ENCODE measurements at regions of chr10 and their contacts with region 1.

Region 1: DNA sequence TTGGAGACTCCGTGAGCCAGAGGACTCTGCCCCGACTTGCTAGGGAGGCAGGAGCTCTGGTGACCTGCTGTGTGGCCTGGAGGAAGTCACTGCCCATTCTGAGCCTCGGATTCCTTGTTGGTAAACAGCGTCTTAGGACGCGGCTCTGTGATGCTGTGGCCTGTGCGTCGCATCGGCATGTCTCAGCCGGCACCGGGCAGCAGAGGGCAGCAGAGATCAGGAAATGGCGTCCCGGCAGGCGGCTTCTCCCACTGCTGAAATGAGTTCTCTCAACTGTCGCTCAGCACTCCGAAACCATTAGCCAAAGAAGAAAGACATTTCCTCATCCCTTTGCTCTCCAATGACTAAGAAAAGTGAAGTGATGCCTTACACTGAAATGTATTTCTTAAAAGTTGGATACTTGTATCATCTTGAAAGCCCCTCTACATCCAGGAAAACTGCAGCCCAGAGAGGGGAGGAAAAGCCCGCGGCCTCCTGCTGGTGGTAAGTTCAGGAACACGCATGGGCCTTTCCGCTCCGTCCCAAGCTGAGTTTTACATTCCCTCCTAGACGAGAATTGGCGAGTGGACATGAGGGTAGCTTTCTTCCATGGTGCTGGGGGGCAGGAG is 91.7 kb downstream of the WDR11 start:
- DNase-seq: peak; percentile 72 to 91 (median 86)
- H3K4me3 ChIP-seq: peak overlapping the region in 25 of 59 donors; percentile 5 to 41 (median 24)
- H3K27ac ChIP-seq: peak overlapping the region in 53 of 59 donors; percentile 4 to 99 (median 77)
- H3K27me3 ChIP-seq: no peaks in the 10 kb centered on the region
- CTCF ChIP-seq: peak; percentile 49 to 99 (median 94)

Region 2: DNA sequence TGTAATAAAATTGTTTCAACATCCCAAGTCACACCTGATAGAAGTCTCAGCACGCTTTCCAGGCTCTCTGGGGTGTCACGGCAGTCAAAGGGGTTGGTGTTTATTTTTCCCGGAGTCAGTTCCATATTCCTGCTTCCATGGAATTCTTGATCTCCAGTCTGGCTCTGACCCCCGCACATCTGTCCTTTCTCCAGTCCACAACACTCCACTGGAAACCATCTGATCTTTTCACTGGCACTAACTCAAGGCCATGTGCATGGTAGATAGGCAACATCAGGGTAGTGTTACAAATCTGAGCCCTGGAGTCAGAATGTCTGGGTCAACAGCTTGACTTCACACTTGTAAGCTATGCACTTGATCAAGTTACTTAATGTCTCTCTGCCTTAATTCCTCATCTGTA is 84.5 kb after region 1 on chr10:
- intact Hi-C with region 1: no loop called
- DNase-seq: no peak
- H3K4me3 ChIP-seq: no peak overlapping the region
- H3K27ac ChIP-seq: no peak overlapping the region
- H3K27me3 ChIP-seq: no peaks in the 10 kb centered on the region
- CTCF ChIP-seq: no peak

Region 3: DNA sequence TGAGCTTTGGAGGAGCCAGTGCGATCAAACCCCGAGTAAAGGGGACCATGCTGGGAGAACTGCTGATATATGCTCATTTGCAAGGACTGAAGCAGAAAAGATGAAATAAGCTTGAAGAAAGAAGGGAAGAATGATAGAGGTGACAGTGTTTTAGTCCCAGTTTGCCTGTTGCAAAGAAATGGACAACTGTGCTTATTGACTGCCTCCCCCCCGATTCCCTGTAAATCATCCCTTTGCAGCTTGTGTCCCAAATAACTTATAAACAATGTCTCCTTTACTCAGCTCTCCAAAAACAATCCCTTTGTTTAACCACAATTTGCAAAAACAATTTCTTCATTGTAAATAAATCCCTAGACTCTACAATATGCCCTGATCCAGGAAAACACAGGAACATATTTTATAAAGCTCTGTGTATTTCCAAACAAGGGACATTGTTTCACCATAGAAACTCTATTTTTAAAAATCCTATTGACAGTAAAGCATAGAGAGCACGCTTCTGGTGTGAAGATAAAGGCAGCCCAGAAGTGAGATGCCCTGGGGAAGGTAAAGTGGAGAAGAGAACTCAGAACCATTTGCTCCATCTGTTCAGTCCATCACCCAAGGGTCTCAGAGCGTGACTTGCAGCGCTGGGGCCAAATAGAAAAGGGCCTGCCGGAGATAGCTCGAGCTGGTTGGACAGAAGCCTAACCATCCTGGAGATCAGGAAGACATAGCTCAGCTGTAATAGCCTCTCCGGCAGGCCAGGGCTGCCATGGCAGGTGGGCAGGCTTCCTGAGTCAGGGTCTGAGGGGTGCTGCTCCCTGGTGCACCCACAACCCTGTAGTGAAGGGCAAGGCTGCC is 188.7 kb after region 1 on chr10:
- intact Hi-C with region 1: loop called in 1 of 2 experiments (anchors 2 kb)
- DNase-seq: peak in 2 of 10 donors; percentile 44 to 50
- H3K4me3 ChIP-seq: peak overlapping the region in 3 of 59 donors; percentile 2 to 17 (median 14)
- H3K27ac ChIP-seq: peak overlapping the region; percentile 42 to 99 (median 95)
- H3K27me3 ChIP-seq: no peaks in the 10 kb centered on the region
- CTCF ChIP-seq: peak in 2 of 56 donors; percentile 4 to 6

Region 4: GRCh38 chr10:121216721-121217181 is 273.8 kb after region 1 on chr10:
- intact Hi-C with region 1: loop called in 1 of 2 experiments (anchors 10 kb)
- DNase-seq: peak; percentile 5 to 87 (median 76)
- H3K4me3 ChIP-seq: peak overlapping the region in 2 of 59 donors; percentile 8 to 19
- H3K27ac ChIP-seq: peak overlapping the region; percentile 59 to 97 (median 91)
- H3K27me3 ChIP-seq: peaks cover 0 to 6% (median 0%) of the 10 kb centered on the region in 45 donors
- CTCF ChIP-seq: peak in 10 of 56 donors; percentile 5 to 42 (median 26)

Region 5: GRCh38 chr10:121332829-121333633 is 390.1 kb after region 1 on chr10:
- intact Hi-C with region 1: loop called in 1 of 2 experiments (anchors 10 kb)
- DNase-seq: peak in 1 of 10 donors; percentile 14
- H3K4me3 ChIP-seq: no peak overlapping the region
- H3K27ac ChIP-seq: peak overlapping the region in 30 of 59 donors; percentile 1 to 87 (median 54)
- H3K27me3 ChIP-seq: peaks cover 0 to 3% (median 0%) of the 10 kb centered on the region in 45 donors
- CTCF ChIP-seq: no peak

Region 6: DNA sequence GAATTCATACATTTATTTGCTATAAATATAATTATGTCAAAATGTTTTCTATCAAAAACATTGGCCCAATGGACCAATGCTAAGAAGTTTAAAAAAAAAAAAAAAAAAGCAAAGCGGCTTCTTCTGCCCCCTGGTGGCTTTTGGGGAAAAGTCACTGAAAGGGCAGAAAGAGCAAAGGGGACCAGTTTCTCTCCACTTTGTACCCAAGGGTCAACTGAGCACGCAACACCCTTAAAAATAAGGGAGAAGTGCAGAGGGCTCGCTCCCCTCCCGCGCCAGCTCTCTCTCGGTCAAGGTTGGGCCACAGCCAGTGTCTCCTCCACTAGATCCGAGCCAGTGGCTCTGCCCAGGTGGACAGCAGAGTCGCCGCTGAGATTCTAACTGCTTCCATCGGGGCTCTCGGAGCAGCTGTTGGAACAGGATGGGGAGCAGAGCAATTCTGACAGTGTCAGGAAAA is 791.7 kb after region 1 on chr10:
- intact Hi-C with region 1: loop called (anchors 2 kb)
- DNase-seq: peak in 2 of 10 donors; percentile 7 to 56
- H3K4me3 ChIP-seq: peak overlapping the region in 52 of 59 donors; percentile 8 to 61 (median 42)
- H3K27ac ChIP-seq: peak overlapping the region in 8 of 59 donors; percentile 5 to 60 (median 16)
- H3K27me3 ChIP-seq: no peaks in the 10 kb centered on the region
- CTCF ChIP-seq: peak; percentile 62 to 89 (median 83)

Region 7: DNA sequence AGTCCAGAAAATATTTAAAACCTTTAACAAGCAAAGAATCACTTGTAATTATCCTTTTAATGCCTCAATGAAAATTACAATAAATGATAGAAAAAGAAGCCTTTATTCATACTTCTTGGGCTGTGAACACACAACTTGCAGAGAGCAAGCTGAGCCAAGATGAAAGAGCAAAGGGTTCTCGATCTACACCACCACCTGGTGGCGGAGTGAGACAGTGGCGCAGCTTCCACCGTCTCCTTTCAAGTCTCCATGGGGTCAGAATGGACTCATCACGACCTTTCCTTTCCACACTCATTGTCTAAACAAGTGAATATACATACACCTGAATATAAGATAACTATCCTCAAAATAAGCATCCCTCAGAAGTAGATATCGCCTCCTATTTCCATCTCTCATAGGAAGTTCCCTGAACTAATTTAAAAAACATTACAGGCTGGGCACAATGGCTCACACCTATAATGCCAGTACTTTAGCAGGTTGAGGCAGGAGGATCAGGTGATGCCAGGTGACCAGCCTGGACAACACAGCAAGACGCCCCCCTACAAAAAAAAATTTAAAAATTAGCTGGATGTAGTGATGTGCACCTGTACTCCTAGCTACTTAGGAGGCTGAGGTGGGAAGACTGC is 944.2 kb after region 1 on chr10:
- intact Hi-C with region 1: loop called (anchors 1 to 5 kb)
- DNase-seq: peak; percentile 10 to 79 (median 68)
- H3K4me3 ChIP-seq: no peak overlapping the region
- H3K27ac ChIP-seq: peak overlapping the region in 6 of 59 donors; percentile 4 to 25 (median 17)
- H3K27me3 ChIP-seq: no peaks in the 10 kb centered on the region
- CTCF ChIP-seq: peak; percentile 61 to 93 (median 85)

Region 8: DNA sequence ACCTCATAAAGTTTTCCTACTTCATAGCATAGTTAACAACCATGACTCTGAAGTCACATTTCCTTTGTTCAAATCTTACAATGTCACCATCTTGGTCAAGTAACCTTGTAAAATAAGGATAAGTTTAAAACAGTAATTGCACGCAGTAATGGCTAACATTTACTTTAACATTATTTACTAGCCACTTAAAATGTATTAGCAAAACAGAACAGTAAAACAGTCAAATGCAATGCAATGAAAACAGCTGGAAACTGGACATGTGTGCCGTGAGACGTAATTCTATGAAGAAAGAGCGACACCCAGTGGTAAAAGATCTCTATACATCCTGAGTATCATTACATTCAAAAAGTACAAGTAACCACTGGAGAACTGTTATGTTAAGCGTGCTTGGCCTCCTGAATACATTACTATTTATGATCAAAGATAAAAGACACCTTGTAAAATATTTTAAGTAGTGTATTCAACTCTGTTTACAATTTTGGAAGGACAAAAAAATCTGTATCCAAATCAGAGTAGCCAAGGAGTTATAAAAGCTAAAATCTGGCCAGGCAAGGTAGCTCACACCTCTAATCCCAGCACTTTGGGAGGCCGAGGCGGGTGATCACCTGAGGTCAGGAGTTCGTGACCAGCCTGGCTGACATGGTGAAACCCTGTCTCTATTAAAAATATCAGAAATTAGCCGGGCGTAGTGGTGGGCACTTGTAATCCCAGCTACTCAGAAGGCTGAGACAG is 957.7 kb after region 1 on chr10:
- intact Hi-C with region 1: loop called in 1 of 2 experiments (anchors 5 kb)
- DNase-seq: no peak
- H3K4me3 ChIP-seq: no peak overlapping the region
- H3K27ac ChIP-seq: peak overlapping the region in 11 of 59 donors; percentile 1 to 52 (median 34)
- H3K27me3 ChIP-seq: no peaks in the 10 kb centered on the region
- CTCF ChIP-seq: peak; percentile 59 to 95 (median 81)

Measured in dorsolateral prefrontal cortex (tissue), 120 donors.